ENCODE measurements at regions of chr10 and their contacts with region 1.

Region 1: DNA sequence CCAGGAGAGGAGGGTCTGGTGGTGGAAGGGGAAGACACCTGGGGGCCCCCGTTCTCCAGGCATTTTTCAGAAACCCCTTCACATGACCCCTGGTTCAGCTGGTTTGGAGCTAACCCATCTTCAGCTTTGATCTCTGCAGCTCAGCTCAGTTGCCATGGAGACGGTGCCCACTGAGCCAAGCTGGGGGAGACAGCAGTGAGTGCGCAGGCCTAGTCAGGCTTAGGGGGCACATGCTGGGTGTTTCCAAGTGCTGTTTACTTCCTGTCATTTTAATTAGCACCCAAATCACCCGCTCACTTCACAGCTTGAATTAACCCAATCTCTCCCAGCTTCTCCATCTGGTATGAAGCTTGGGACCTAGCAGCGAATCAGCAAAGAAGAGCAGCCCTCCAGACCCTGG is 9.0 kb downstream of the SPOCK2 start:
- DNase-seq: peak in 12 of 14 experiments; percentile 44 to 89 (median 68)
- ATAC-seq: peak; percentile 38
- H3K4me3 ChIP-seq: peak overlapping the region; percentile 28
- H3K4me3 Mint-ChIP-seq: peak overlapping the region; percentile 78
- H3K27ac ChIP-seq: peak overlapping the region; percentile 46 to 96
- H3K27ac Mint-ChIP-seq: peak overlapping the region; percentile 98
- H3K4me1 ChIP-seq: peaks cover 100% of the 10 kb centered on the region
- H3K4me1 Mint-ChIP-seq: peaks cover 93% of the 10 kb centered on the region
- H3K27me3 ChIP-seq: no peaks in the 10 kb centered on the region
- H3K27me3 Mint-ChIP-seq: no peaks in the 10 kb centered on the region
- CTCF ChIP-seq: no peak

Region 2: GRCh38 chr10:71782917-71783490 is 296.4 kb before region 1 on chr10:
- CTCF ChIA-PET with region 1: no interaction called
- POLR2A ChIA-PET with region 1: no interaction called
- intact Hi-C with region 1: no loop called
- DNase-seq: no peak
- ATAC-seq: no peak
- H3K4me3 ChIP-seq: no peak overlapping the region
- H3K4me3 Mint-ChIP-seq: no peak overlapping the region
- H3K27ac ChIP-seq: no peak overlapping the region
- H3K27ac Mint-ChIP-seq: no peak overlapping the region
- H3K4me1 ChIP-seq: peaks cover 6% of the 10 kb centered on the region
- H3K4me1 Mint-ChIP-seq: no peaks in the 10 kb centered on the region
- H3K27me3 ChIP-seq: no peaks in the 10 kb centered on the region
- H3K27me3 Mint-ChIP-seq: no peaks in the 10 kb centered on the region
- CTCF ChIP-seq: no peak

Region 3: DNA sequence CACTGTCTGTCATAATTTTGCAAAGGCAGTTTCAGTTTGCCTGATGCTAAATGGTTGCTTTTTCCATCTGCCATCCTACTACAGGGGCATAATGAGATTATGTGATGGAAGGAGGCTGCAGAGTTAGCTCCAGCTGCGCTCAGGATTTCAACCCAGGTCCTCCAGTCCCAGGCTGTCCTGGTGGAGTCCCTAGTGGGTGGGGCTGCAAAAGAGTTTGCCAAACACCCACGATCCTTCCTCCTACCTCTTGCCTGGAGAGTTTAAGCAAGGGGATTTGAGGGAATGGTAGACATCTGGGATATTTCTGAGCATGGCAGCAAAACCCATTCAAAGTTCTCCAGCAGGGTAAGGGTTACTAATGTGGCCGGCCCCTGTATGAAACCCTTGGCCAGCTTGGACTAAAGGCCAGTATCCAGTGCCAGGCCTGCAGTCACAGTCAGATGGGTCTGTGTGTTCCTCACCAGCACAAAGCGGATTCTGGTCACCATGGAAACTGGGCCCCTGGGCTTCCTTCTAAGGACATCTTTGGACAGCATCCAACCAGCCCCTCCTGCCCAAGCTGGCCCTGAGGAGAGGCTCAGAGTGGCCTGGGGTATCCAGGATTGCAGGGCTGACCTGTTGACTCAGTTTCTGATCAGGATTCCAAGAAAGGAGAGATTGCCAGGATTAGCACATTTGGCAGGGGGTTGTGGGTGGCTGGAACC is 157.9 kb before region 1 on chr10:
- CTCF ChIA-PET with region 1: no interaction called
- POLR2A ChIA-PET with region 1: no interaction called
- intact Hi-C with region 1: no loop called
- DNase-seq: no peak
- ATAC-seq: no peak
- H3K4me3 ChIP-seq: no peak overlapping the region
- H3K4me3 Mint-ChIP-seq: no peak overlapping the region
- H3K27ac ChIP-seq: no peak overlapping the region
- H3K27ac Mint-ChIP-seq: no peak overlapping the region
- H3K4me1 ChIP-seq: no peaks in the 10 kb centered on the region
- H3K4me1 Mint-ChIP-seq: no peaks in the 10 kb centered on the region
- H3K27me3 ChIP-seq: no peaks in the 10 kb centered on the region
- H3K27me3 Mint-ChIP-seq: no peaks in the 10 kb centered on the region
- CTCF ChIP-seq: no peak

Region 4: DNA sequence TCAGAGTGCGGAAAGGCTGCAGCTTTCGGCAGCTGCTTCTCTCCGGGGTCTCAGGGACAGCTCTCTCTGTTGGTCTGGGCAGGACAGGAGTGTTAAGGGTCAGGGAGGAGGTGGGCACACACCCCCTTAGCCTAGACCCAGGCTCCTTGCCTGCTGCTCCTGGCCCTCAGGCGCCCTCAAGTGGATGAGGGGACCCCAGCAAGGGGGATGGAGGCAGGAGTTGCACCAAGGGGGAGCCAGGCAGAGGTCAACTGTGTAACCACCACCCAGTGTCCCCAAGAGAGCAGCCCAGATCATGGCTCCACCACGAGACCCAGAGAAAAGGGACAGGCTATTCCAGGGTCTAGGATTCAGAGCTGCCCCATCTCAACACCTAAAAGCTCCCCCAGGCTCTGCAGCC is 17.9 kb before region 1 on chr10:
- CTCF ChIA-PET with region 1: no interaction called
- POLR2A ChIA-PET with region 1: interaction called, 8 read pairs
- intact Hi-C with region 1: loop called in 1 of 2 experiments (anchors 2 kb)
- DNase-seq: peak in 1 of 14 experiments; percentile 39
- ATAC-seq: peak; percentile 18
- H3K4me3 ChIP-seq: no peak overlapping the region
- H3K4me3 Mint-ChIP-seq: peak overlapping the region; percentile 79
- H3K27ac ChIP-seq: no peak overlapping the region
- H3K27ac Mint-ChIP-seq: peak overlapping the region; percentile 95
- H3K4me1 ChIP-seq: peaks cover 10% of the 10 kb centered on the region
- H3K4me1 Mint-ChIP-seq: peaks cover 47% of the 10 kb centered on the region
- H3K27me3 ChIP-seq: no peaks in the 10 kb centered on the region
- H3K27me3 Mint-ChIP-seq: peaks cover 25% of the 10 kb centered on the region
- CTCF ChIP-seq: no peak

Region 5: DNA sequence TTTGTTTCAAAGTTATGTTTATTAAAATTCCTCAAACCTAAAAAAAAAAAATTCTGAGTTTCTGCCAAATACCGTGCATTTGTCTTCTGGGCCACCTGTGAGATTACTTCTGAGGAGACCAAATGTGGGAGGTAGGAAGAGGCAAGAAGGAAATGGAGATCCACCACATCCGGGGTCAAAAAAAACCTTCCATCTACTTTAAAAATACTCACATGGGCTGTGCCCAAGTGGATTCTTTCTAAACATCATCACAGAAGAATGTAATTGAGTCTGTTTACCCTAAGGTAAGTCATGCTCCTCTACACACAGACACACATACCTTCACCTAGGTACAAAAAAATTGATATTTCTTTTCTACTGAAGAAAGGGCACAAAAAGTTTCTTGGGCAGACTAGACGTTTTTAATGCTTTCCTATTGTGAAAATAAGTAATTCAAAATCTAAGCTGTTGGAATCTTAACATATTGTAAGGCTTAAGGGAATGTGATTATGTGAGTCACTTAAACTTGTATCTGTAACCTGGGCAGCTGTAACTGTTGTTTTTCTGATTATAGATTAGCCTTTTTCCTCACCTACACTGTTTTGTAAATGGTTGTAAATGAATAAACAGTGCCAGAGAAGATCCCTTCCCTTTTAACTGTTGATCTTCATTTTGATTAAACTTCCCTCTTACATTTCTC is 28.1 kb after region 1 on chr10:
- CTCF ChIA-PET with region 1: interaction called, 6 read pairs
- POLR2A ChIA-PET with region 1: interaction called, 117 read pairs
- intact Hi-C with region 1: no loop called
- DNase-seq: peak in 4 of 14 experiments; percentile 34 to 82 (median 78)
- ATAC-seq: peak; percentile 77
- H3K4me3 ChIP-seq: peak overlapping the region; percentile 12
- H3K4me3 Mint-ChIP-seq: peak overlapping the region; percentile 87
- H3K27ac ChIP-seq: peak overlapping the region; percentile 69 to 74
- H3K27ac Mint-ChIP-seq: peak overlapping the region; percentile 94
- H3K4me1 ChIP-seq: peaks cover 70% of the 10 kb centered on the region
- H3K4me1 Mint-ChIP-seq: peaks cover 92% of the 10 kb centered on the region
- H3K27me3 ChIP-seq: no peaks in the 10 kb centered on the region
- H3K27me3 Mint-ChIP-seq: no peaks in the 10 kb centered on the region
- CTCF ChIP-seq: no peak